ENCODE measurements at regions of chr20 and their contacts with region 1.

Region 1: DNA sequence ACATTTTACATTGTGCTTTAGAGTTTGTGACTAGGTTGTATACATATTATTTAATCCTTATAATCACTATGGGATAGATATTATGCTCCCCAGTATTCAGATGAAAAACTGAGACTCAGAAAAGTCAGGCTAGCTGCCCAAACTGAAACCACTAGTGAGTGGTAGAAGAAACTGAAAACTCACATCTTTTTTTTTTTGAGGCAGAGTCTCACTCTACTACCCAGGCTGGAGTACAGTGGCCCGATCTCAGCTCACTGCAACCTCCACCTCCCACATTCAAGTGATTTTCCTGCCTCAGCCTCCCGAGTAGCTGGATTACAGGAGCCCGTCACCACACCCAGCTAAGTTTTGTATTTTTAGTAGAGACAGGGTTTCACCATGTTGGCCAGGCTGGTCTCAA is 22.2 kb downstream of the RNF24 start:
- DNase-seq: no peak
- ATAC-seq: peak; percentile 47
- H3K4me3 Mint-ChIP-seq: no peak overlapping the region
- H3K27ac Mint-ChIP-seq: peak overlapping the region; percentile 11
- H3K4me1 Mint-ChIP-seq: peaks cover 58% of the 10 kb centered on the region
- H3K27me3 Mint-ChIP-seq: no peaks in the 10 kb centered on the region

Region 2: GRCh38 chr20:4006640-4007039 is 13.5 kb after region 1 on chr20:
- CTCF ChIA-PET with region 1: interaction called, 10 read pairs
- POLR2A ChIA-PET with region 1: interaction called, 4 read pairs
- DNase-seq: no peak
- ATAC-seq: no peak
- H3K4me3 Mint-ChIP-seq: no peak overlapping the region
- H3K27ac Mint-ChIP-seq: no peak overlapping the region
- H3K4me1 Mint-ChIP-seq: peaks cover 8% of the 10 kb centered on the region
- H3K27me3 Mint-ChIP-seq: no peaks in the 10 kb centered on the region

Region 3: DNA sequence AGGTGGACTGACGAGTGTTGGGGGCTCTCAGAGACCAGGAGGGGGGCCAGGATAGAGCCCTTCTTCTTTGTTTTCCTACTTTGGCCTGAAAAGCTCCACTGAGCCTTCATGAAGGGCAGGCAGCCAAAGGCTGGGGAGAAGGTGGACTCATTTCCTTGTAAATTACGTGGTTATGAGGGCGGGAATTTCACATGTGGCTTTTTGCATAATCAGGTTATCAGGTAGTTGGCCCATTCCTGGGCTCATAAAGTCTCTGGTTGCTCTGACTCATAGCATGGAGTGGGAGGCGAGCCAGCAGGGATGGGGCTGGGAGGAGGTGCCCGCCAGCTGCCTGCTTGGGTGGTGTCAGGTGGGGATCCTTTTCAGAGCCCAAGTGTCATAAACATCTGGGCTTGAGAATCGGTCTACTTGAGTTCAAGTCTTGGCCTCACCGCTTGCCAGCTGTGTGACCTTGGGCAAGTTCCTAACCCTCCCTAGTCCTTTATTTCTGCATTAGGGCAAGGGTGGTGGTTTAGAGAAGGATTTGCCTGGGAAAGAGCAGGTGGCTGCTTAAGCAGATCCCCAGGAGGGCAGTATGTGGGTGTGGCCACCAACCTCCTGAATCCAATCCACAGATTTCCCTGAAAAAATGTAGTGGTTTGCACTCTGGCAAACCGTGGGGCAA is 48.8 kb after region 1 on chr20:
- CTCF ChIA-PET with region 1: no interaction called
- POLR2A ChIA-PET with region 1: no interaction called
- DNase-seq: no peak
- ATAC-seq: no peak
- H3K4me3 Mint-ChIP-seq: no peak overlapping the region
- H3K27ac Mint-ChIP-seq: no peak overlapping the region
- H3K4me1 Mint-ChIP-seq: peaks cover 32% of the 10 kb centered on the region
- H3K27me3 Mint-ChIP-seq: peaks cover 4% of the 10 kb centered on the region

Region 4: DNA sequence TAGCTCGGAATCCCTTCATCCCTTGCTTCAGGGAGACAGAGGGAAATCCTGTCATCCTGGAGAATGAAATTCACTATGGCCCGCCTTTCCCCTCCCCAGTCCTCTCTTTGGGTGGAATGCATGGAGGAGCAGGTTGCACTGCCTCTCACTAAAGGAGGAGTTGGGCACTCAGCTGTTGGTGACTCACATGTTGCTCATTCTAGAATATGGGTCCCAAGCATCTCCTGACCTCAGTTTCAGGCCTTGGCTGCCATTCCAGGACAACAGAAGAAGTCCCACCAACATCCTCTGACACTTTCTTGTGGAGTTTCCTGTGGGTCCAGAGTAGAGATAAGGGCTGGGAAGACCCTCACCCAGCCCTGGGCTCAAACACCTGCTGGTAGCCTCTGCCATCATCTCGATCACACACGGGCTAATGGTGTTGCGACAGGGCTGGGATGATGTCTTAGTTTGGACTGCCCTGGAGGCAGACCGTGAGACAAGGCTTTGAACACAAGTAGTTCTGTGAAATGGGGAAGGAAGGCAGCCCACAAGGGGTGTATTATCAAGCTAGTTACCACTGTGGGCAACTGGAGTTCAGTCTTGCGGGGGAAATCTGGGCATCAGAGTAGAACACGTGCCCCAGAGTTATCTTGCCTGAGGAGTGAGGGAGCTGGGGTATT is 74.6 kb after region 1 on chr20:
- CTCF ChIA-PET with region 1: no interaction called
- POLR2A ChIA-PET with region 1: no interaction called
- DNase-seq: no peak
- ATAC-seq: no peak
- H3K4me3 Mint-ChIP-seq: no peak overlapping the region
- H3K27ac Mint-ChIP-seq: no peak overlapping the region
- H3K4me1 Mint-ChIP-seq: peaks cover 21% of the 10 kb centered on the region
- H3K27me3 Mint-ChIP-seq: no peaks in the 10 kb centered on the region